ENCODE measurements at regions of chr5 and their contacts with region 1.

Region 1: GRCh38 chr5:173472141-173472543 is 143.9 kb upstream of the STC2 start:
- DNase-seq: peak; percentile 86
- H3K4me3 ChIP-seq: no peak overlapping the region
- CTCF ChIP-seq: no peak

Region 2: GRCh38 chr5:173342813-173343755 is 129.1 kb before region 1 on chr5:
- CTCF ChIA-PET with region 1: no interaction called
- POLR2A ChIA-PET with region 1: no interaction called
- DNase-seq: no peak
- H3K4me3 ChIP-seq: no peak overlapping the region
- CTCF ChIP-seq: no peak

Region 3: GRCh38 chr5:173451031-173451430 is 21.1 kb before region 1 on chr5:
- CTCF ChIA-PET with region 1: interaction called, 4 read pairs
- POLR2A ChIA-PET with region 1: interaction called, 11 read pairs
- DNase-seq: no peak
- H3K4me3 ChIP-seq: no peak overlapping the region
- CTCF ChIP-seq: peak; percentile 19